Left cardiac atrium (tissue), 4 donors: ENCODE measurements at regions of chr1 and their contacts with region 1.

Region 1: DNA sequence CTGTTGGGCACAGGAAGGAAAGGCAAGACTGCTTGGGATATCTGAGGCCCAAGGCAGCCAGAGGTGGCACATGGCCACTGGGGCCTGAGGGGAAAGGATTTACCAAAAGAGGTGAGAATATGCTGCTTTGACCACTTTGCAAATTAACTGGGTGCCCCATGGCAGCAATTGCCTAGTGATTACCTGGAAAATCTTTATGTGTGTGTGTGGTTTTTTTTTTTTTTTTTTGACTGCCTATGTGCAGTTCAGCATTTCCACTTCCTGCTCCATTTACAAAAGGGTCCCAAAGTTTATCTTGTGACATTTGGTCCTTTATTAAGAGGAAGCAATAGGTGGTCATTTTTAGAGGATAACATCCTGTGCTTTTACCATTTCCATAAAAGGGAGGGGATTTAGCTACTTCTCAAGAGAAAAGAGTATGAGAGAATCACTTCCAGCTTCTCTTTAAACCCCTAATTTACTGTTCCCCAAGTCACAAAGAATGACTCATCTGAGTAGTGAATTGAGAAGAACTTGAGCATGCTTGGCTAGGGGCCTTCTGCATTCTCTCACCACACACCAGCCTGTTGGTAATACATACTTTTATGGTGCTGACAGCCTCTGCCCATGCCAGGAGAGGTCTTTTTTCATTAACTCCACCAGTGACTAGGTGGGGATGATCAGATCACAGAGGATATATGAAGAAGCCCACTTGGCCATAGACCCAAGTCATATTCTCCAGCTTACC is 52.1 kb downstream of the SYDE2 start:
- DNase-seq: no peak
- ATAC-seq: peak; percentile 82 to 91

Region 2: GRCh38 chr1:85091671-85092280 is 56.9 kb before region 1 on chr1:
- intact Hi-C with region 1: no loop called
- DNase-seq: no peak
- ATAC-seq: no peak

Region 3: GRCh38 chr1:85199667-85200361 is 51.1 kb after region 1 on chr1:
- intact Hi-C with region 1: loop called in 1 of 2 experiments (anchors 5 kb)
- DNase-seq: no peak
- ATAC-seq: no peak

Region 4: GRCh38 chr1:85448358-85448757 is 299.7 kb after region 1 on chr1:
- intact Hi-C with region 1: no loop called
- DNase-seq: no peak
- ATAC-seq: peak in 1 of 2 donors; percentile 77